CD4-positive, alpha-beta memory T cell (primary cell): ENCODE measurements at regions of chr18 and their contacts with region 1.

Region 1: DNA sequence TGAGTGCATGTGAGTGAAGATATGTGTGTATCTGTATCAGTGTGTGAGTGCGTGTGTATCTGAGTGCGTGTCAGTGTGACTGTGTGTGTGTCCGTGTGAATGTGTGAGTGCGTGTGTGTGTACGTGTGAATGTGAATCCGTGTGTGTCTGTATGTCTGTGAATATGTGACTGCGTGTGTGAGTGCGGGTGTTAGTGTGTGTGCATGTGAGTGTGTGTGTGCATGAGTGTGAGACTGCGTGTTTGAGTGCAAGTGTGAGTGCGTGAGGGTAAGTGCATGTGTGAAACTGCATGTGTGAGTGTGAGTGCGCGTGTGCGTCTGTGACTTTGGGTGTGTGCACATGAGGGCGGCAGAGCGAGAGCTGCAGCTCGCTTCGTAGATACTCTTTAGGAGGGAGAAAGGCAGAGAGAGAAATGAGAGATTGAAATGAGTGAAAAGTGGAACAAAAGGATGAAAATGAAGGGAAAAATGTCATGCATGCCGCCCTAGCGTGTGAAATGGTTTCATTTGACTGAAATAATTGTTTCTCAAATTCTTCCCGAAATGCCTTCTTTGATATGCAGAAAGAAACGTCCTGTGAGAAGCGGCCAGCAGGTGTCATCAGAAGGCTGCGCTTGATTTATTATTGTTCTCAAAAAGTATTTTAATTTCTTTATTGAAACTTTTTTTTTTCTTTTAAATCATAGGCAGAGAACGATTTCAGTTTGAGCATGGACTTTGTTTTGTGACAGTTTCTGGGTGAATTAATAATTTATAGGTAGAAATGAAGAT is 25.6 kb downstream of the ZNF407 start:
- DNase-seq: peak in 3 of 5 donors; percentile 23 to 29 (median 27)
- H3K4me3 ChIP-seq: no peak overlapping the region
- H3K4me3 Mint-ChIP-seq: no peak overlapping the region
- H3K27ac ChIP-seq: no peak overlapping the region
- H3K27ac Mint-ChIP-seq: no peak overlapping the region
- H3K4me1 ChIP-seq: no peaks in the 10 kb centered on the region
- H3K4me1 Mint-ChIP-seq: peaks cover 0 to 17% (median 9%) of the 10 kb centered on the region in 4 donors
- H3K27me3 ChIP-seq: no peaks in the 10 kb centered on the region
- H3K27me3 Mint-ChIP-seq: no peaks in the 10 kb centered on the region

Region 2: GRCh38 chr18:74468547-74469061 is 154.6 kb before region 1 on chr18:
- CTCF ChIA-PET with region 1: no interaction called
- POLR2A ChIA-PET with region 1: no interaction called
- intact Hi-C with region 1: no loop called
- DNase-seq: no peak
- H3K4me3 ChIP-seq: no peak overlapping the region
- H3K4me3 Mint-ChIP-seq: no peak overlapping the region
- H3K27ac ChIP-seq: no peak overlapping the region
- H3K27ac Mint-ChIP-seq: no peak overlapping the region
- H3K4me1 ChIP-seq: no peaks in the 10 kb centered on the region
- H3K4me1 Mint-ChIP-seq: no peaks in the 10 kb centered on the region
- H3K27me3 ChIP-seq: no peaks in the 10 kb centered on the region
- H3K27me3 Mint-ChIP-seq: peaks cover 3% of the 10 kb centered on the region in 2 donors

Region 3: DNA sequence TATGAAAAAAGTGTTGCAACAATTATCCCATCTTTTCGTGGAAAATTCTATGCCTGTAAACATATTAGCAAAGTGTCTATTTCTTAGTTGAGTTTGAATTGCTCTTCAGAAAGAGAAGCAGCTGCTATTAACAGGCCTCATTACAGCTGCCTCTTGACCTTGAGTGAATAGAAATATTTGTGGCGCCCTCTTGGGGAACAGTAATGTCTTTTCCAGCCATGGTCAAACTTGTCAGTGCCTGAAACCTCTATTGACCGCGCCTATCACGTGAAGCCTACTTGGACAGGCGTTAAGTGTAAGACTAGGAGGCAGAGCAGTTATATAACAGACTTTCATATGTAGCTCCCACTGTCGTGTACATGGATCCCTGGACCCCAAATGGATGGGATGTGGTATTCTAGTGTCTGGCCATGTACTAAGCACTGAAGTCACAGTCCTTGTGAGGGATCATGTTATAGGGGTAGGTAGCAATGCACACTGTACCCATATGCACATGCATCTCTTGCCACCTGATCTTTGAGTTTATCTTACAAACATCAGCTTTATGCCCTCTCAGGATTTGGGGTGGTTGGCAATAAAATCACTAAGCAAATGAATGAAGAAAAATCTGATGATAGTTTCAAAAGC is 340.7 kb after region 1 on chr18:
- CTCF ChIA-PET with region 1: no interaction called
- POLR2A ChIA-PET with region 1: no interaction called
- intact Hi-C with region 1: loop called (anchors 10 kb)
- DNase-seq: no peak
- H3K4me3 ChIP-seq: no peak overlapping the region
- H3K4me3 Mint-ChIP-seq: no peak overlapping the region
- H3K27ac ChIP-seq: no peak overlapping the region
- H3K27ac Mint-ChIP-seq: peak overlapping the region in 1 of 7 donors; percentile 27
- H3K4me1 ChIP-seq: no peaks in the 10 kb centered on the region
- H3K4me1 Mint-ChIP-seq: peaks cover 0 to 13% (median 4%) of the 10 kb centered on the region in 4 donors
- H3K27me3 ChIP-seq: no peaks in the 10 kb centered on the region
- H3K27me3 Mint-ChIP-seq: no peaks in the 10 kb centered on the region

Region 4: DNA sequence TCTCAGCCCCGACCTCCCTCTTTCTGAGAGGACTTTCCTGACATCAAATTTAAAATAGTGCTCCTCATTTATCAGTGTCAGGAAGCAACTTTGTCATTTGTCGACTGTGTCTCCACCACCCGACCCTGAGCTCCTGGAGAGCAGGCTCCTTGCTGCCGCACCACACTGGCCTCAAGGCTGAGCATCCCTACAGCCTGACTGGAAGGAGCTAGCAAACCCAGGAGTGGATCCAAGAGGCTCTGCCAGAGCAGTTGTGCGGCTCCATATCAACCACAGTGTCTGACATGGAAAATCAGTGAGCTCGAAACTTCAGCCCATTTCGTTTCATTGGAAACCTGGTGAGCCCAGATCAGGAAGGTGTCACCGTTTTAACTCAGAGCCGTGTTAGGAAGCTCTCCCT is 460.5 kb after region 1 on chr18:
- CTCF ChIA-PET with region 1: interaction called, 3 read pairs
- POLR2A ChIA-PET with region 1: no interaction called
- intact Hi-C with region 1: loop called (anchors 1 kb)
- DNase-seq: no peak
- H3K4me3 ChIP-seq: no peak overlapping the region
- H3K4me3 Mint-ChIP-seq: no peak overlapping the region
- H3K27ac ChIP-seq: no peak overlapping the region
- H3K27ac Mint-ChIP-seq: no peak overlapping the region
- H3K4me1 ChIP-seq: no peaks in the 10 kb centered on the region
- H3K4me1 Mint-ChIP-seq: no peaks in the 10 kb centered on the region
- H3K27me3 ChIP-seq: no peaks in the 10 kb centered on the region
- H3K27me3 Mint-ChIP-seq: peaks cover 2 to 3% of the 10 kb centered on the region in 2 donors

Region 5: GRCh38 chr18:75364512-75365253 is 741.5 kb after region 1 on chr18:
- CTCF ChIA-PET with region 1: no interaction called
- POLR2A ChIA-PET with region 1: no interaction called
- intact Hi-C with region 1: loop called (anchors 10 kb)
- DNase-seq: no peak
- H3K4me3 ChIP-seq: no peak overlapping the region
- H3K4me3 Mint-ChIP-seq: no peak overlapping the region
- H3K27ac ChIP-seq: no peak overlapping the region
- H3K27ac Mint-ChIP-seq: no peak overlapping the region
- H3K4me1 ChIP-seq: no peaks in the 10 kb centered on the region
- H3K4me1 Mint-ChIP-seq: peaks cover 0 to 1% (median under 1%) of the 10 kb centered on the region in 4 donors
- H3K27me3 ChIP-seq: no peaks in the 10 kb centered on the region
- H3K27me3 Mint-ChIP-seq: peaks cover under 1 to 1% of the 10 kb centered on the region in 2 donors

Region 6: DNA sequence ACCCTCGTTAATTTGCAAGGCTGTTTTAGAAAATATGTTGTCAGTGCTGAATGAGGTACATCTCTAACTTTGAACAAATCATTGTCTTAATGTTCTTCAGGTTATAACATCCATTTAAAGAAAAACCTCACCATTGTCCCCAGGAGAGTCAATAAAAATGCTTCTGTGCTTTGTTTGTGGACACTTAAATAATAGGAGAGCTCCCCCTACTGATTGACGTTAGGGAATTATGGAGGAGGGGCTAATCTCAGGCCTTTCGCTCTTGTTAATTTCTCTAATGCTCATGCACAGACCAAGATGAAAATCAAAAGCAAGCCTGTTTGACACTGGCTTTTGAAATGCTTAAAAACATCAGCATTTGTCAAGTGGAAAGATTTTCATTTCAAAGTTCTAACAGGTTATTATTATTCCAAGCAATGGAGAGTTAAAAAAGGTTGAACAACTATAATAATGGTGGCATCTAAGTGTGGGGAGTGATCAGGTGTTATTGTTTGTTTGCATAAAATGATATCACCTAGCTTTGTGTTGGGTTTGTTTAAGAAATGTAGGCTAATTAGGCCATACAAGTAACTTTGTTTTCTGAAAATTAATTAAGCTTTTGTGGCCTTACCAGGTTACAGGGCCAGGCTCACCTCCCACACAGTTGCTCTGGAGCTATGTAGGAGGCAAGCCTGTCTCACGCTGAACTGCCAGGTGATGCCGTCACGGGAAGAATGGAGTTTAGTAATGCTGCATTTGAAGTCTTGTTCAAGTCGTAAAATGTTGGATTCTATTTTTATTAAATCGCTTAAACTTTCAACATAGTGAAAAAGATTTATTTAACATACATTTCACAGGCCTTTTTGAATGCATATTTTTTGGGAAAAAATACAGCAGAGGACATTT is 856.0 kb after region 1 on chr18:
- CTCF ChIA-PET with region 1: interaction called, 11 read pairs
- POLR2A ChIA-PET with region 1: no interaction called
- intact Hi-C with region 1: loop called (anchors 1 kb)
- DNase-seq: peak in 4 of 5 donors; percentile 41 to 48 (median 43)
- H3K4me3 ChIP-seq: no peak overlapping the region
- H3K4me3 Mint-ChIP-seq: no peak overlapping the region
- H3K27ac ChIP-seq: no peak overlapping the region
- H3K27ac Mint-ChIP-seq: no peak overlapping the region
- H3K4me1 ChIP-seq: no peaks in the 10 kb centered on the region
- H3K4me1 Mint-ChIP-seq: peaks cover 0 to 5% (median 0%) of the 10 kb centered on the region in 4 donors
- H3K27me3 ChIP-seq: no peaks in the 10 kb centered on the region
- H3K27me3 Mint-ChIP-seq: peaks cover 14 to 16% of the 10 kb centered on the region in 2 donors